Dendritic cell treated with granulocyte-macrophage colony-stimulating factor and Interleukin-4, amounts not matched to agents 40 ng/mL and 50 ng/mL, for 4 days (primary cell): ENCODE measurements at regions of chr4 and their contacts with region 1.

Region 1: DNA sequence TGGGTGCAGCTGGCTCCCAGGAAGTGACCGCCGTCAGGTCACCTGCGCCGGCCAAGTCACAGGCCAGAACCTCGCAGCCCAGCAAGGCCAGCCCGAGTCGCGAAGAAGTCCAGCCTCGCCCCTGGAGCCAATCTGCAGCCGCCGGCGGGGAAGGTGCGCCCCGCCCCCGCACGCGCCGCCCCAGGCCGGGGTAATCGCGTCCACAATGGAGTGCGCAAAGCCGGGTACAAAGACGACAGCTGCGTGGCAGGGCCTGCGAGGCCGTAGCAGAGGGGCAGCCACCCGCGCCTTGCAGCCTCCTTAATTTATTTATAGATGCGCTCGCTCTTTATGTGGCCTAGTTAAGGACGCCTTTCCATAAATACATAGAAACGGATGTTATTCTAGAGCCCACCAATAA is 139.4 kb upstream of the CPEB2 start:
- H3K4me3 Mint-ChIP-seq: no peak overlapping the region
- H3K27ac Mint-ChIP-seq: no peak overlapping the region
- H3K4me1 Mint-ChIP-seq: peaks cover 23% of the 10 kb centered on the region
- H3K27me3 Mint-ChIP-seq: peaks cover 50% of the 10 kb centered on the region

Region 2: DNA sequence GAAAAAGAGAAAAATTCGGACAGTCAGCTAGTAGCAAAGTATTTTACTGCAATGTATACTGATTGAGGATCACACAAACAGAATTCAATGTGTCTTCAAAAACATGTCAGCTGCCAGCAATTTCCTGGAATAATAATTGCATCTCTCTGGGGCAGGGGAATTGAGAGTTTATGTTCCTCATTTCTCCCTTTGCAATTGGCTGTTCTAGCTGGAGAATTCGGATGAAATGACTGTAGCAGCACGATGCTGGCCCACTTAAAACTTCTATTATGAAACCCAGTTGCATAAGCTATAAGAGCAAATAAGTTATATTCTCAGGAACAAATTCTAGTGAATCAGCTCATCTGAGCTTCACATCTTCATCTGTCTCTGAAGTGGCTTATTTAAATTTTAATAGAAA is 39.5 kb after region 1 on chr4:
- intact Hi-C with region 1: loop called (anchors 5 kb)
- H3K4me3 Mint-ChIP-seq: peak overlapping the region; percentile 45
- H3K27ac Mint-ChIP-seq: peak overlapping the region; percentile 90
- H3K4me1 Mint-ChIP-seq: peaks cover 58% of the 10 kb centered on the region
- H3K27me3 Mint-ChIP-seq: peaks cover 20% of the 10 kb centered on the region

Region 3: DNA sequence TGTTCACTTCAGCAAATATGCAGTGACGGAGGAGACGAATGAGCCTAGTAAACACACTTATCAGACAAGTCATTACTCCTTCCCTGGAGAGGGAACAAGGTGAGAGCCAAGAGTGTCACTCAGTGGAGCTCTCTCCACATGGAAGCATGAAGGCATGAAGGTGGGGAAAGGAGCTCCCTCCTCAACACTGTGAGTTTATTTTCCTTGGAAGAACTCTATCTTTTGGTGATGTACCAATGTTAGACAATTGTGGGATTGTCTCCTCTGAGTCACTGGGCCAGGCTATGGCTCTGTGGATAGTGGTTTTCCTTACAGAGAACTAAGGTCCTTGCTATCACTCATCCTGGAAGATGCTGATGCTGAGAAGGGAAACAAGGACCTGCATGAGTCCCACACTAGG is 339.6 kb after region 1 on chr4:
- intact Hi-C with region 1: no loop called
- H3K4me3 Mint-ChIP-seq: no peak overlapping the region
- H3K27ac Mint-ChIP-seq: no peak overlapping the region
- H3K4me1 Mint-ChIP-seq: no peaks in the 10 kb centered on the region
- H3K27me3 Mint-ChIP-seq: no peaks in the 10 kb centered on the region